ENCODE measurements at regions of chr12 and their contacts with region 1.

Region 1: DNA sequence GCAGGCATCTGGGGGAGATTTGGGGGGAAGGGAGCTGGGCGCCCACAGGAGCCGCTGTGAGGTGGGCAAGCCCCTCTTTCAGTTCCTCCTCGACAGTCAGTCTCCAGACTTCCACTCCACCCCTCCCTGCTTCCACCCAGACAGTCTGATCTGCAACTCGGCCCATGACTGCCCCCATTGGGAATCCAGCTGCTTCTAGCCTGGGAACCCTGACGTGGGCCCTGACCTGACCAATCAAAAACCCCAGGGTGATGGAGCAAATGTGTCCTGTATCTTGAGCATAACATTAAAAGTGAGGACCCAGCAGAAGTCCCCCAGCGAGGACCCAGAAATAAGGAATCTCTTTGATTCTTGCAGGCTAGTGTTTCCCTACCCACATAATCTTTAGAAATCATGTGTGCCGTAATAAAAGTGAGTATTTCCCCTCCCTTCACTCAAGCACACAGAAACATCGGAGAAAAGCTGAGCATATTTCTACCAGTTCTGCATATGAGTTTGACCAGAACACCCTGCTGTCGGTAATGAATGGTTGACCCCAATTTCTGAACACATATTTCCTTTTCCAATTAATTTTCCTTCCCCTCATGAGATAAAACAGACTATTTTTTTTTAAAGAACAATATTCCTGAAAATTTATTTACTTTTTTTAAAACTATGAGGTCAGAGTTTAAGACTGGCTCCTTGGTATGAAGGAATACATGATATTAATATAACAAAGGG is 6.4 kb downstream of the SSH1 start:
- DNase-seq: peak; percentile 95
- H3K4me3 ChIP-seq: peak overlapping the region in 2 of 3 experiments; percentile 47 to 74
- H3K27ac ChIP-seq: peak overlapping the region; percentile 98
- H3K4me1 ChIP-seq: peaks cover 51% of the 10 kb centered on the region
- H3K27me3 ChIP-seq: no peaks in the 10 kb centered on the region
- CTCF ChIP-seq: peak; percentile 20 to 28
- POLR2A ChIP-seq: no peak

Region 2: DNA sequence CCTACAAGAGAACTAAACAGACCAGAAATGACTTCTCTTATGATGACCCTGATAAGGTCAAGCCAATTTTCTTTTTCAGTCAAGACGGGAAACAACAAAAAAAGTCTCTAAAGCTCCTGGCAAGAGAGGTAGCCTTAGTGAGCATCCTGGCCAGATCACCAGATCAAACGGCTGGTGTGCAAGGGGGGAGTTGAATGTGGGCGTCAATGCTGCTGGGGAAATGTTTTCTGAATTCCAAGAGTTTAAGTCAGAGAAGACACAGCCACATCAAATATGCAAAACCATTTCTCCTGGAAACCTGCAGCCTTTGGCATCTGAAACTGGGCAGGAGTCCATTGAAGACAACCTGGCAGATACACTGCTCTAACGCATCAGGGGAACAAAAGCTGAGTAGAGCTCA is 201.3 kb before region 1 on chr12:
- CTCF ChIA-PET with region 1: no interaction called
- POLR2A ChIA-PET with region 1: no interaction called
- dilution Hi-C with region 1: loop called (anchors 25 kb)
- intact Hi-C with region 1: loop called (anchors 5 kb)
- DNase-seq: peak; percentile 76
- H3K4me3 ChIP-seq: no peak overlapping the region
- H3K27ac ChIP-seq: peak overlapping the region; percentile 14
- H3K4me1 ChIP-seq: peaks cover 48% of the 10 kb centered on the region
- H3K27me3 ChIP-seq: no peaks in the 10 kb centered on the region
- CTCF ChIP-seq: no peak
- POLR2A ChIP-seq: no peak

Region 3: GRCh38 chr12:108826101-108826806 is 24.8 kb before region 1 on chr12:
- CTCF ChIA-PET with region 1: interaction called, 62 read pairs
- POLR2A ChIA-PET with region 1: interaction called, 41 read pairs
- dilution Hi-C with region 1: no loop called
- intact Hi-C with region 1: loop called (anchors 1 kb)
- DNase-seq: peak; percentile 98
- H3K4me3 ChIP-seq: peak overlapping the region in 1 of 3 experiments; percentile 49
- H3K27ac ChIP-seq: peak overlapping the region; percentile 100
- H3K4me1 ChIP-seq: peaks cover 71% of the 10 kb centered on the region
- H3K27me3 ChIP-seq: no peaks in the 10 kb centered on the region
- CTCF ChIP-seq: peak in 1 of 2 donors; percentile 23
- POLR2A ChIP-seq: peak; percentile 31

Region 4: GRCh38 chr12:108833355-108833733 is 17.7 kb before region 1 on chr12:
- CTCF ChIA-PET with region 1: interaction called, 62 read pairs
- POLR2A ChIA-PET with region 1: interaction called, 53 read pairs
- dilution Hi-C with region 1: no loop called
- intact Hi-C with region 1: loop called (anchors 1 kb)
- DNase-seq: peak; percentile 81
- H3K4me3 ChIP-seq: no peak overlapping the region
- H3K27ac ChIP-seq: peak overlapping the region; percentile 97
- H3K4me1 ChIP-seq: peaks cover 67% of the 10 kb centered on the region
- H3K27me3 ChIP-seq: no peaks in the 10 kb centered on the region
- CTCF ChIP-seq: no peak
- POLR2A ChIP-seq: no peak

Region 5: DNA sequence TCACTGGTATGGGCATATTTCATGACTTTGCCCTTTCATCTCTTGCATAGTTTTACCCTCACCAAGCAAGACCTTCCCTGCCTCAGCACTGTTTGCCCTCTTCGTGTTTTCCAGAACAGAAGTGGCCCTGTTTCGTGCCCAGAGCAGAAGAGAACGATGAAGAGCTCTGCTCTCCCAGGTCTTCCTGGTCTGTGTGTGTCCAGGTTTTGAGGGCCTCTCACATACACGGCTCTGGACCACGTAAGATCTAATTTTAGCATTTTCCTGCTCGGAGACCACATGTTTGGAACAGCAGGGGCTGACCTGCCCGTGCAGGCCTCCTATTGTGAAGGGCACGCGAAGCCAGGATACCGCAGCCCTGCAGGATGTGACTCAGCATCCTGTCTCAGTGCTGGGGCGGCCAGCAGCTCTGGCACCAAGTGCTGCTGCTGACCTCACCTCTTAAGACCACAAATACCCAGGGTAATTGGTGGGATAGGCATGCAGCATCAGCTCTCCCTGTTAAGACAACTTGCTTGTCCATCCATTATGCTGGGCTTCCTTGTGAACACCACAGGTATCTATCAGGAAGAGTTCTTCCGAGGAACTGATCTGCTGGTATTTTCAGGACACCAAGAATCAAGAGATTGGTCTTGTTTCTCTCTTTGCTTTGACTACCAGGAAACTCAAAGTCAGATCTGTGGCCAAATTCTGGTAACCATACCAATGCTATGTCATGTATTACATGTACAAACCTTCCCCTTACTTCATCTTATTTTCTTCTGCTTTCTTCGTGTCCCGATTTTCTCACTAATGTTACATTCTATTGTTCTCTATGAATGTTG is 12.6 kb before region 1 on chr12:
- CTCF ChIA-PET with region 1: interaction called, 31 read pairs
- POLR2A ChIA-PET with region 1: interaction called, 53 read pairs
- dilution Hi-C with region 1: no loop called
- intact Hi-C with region 1: loop called (anchors 1 kb)
- DNase-seq: peak; percentile 100
- H3K4me3 ChIP-seq: peak overlapping the region in 1 of 3 experiments; percentile 16
- H3K27ac ChIP-seq: peak overlapping the region; percentile 98
- H3K4me1 ChIP-seq: peaks cover 70% of the 10 kb centered on the region
- H3K27me3 ChIP-seq: no peaks in the 10 kb centered on the region
- CTCF ChIP-seq: no peak
- POLR2A ChIP-seq: peak; percentile 79

Region 6: DNA sequence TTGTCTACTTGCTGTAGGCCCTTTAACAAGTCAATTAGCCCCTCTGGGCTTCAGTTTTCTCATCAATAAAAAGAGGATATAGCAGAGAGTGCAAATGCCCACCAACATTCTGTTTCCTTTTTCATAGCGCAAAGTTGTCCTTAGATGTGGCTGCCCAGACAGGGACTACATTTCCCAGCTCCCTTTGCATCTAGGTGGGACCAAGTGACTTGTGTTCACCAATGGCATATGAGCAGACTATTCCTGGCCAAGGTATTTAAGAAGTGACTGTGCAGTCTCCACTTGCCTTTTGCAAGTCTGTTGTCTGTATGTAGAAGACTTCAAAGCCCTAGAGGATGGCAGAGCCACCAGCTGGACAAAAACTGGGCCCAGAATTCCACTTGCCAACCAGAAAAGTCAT is 88.6 kb after region 1 on chr12:
- CTCF ChIA-PET with region 1: no interaction called
- POLR2A ChIA-PET with region 1: no interaction called
- dilution Hi-C with region 1: no loop called
- intact Hi-C with region 1: no loop called
- DNase-seq: peak; percentile 10
- H3K4me3 ChIP-seq: no peak overlapping the region
- H3K27ac ChIP-seq: no peak overlapping the region
- H3K4me1 ChIP-seq: no peaks in the 10 kb centered on the region
- H3K27me3 ChIP-seq: peaks cover 0 to 2% of the 10 kb centered on the region in 2 experiments
- CTCF ChIP-seq: no peak
- POLR2A ChIP-seq: no peak

Region 7: GRCh38 chr12:108950991-108951739 is 100.2 kb after region 1 on chr12:
- CTCF ChIA-PET with region 1: interaction called, 15 read pairs
- POLR2A ChIA-PET with region 1: no interaction called
- dilution Hi-C with region 1: no loop called
- intact Hi-C with region 1: loop called (anchors 1 kb)
- DNase-seq: peak; percentile 80
- H3K4me3 ChIP-seq: no peak overlapping the region
- H3K27ac ChIP-seq: no peak overlapping the region
- H3K4me1 ChIP-seq: no peaks in the 10 kb centered on the region
- H3K27me3 ChIP-seq: no peaks in the 10 kb centered on the region
- CTCF ChIP-seq: peak; percentile 74 to 80
- POLR2A ChIP-seq: no peak

Region 8: GRCh38 chr12:109462710-109463692 is 612.0 kb after region 1 on chr12:
- CTCF ChIA-PET with region 1: no interaction called
- POLR2A ChIA-PET with region 1: no interaction called
- dilution Hi-C with region 1: no loop called
- intact Hi-C with region 1: loop called (anchors 5 kb)
- DNase-seq: peak; percentile 92
- H3K4me3 ChIP-seq: no peak overlapping the region
- H3K27ac ChIP-seq: peak overlapping the region; percentile 89
- H3K4me1 ChIP-seq: peaks cover 71% of the 10 kb centered on the region
- H3K27me3 ChIP-seq: no peaks in the 10 kb centered on the region
- CTCF ChIP-seq: no peak
- POLR2A ChIP-seq: peak; percentile 23

Measured in endothelial cell of umbilical vein (primary cell).